AG04450 (cell line): ENCODE measurements at regions of chr12 and their contacts with region 1.

Region 1: GRCh38 chr12:12365931-12366431 is 9.1 kb downstream of the BORCS5 start:
- DNase-seq: no peak
- H3K4me3 ChIP-seq: no peak overlapping the region
- H3K27ac ChIP-seq: peak overlapping the region; percentile 69
- H3K27me3 ChIP-seq: no peaks in the 10 kb centered on the region
- CTCF ChIP-seq: no peak

Region 2: GRCh38 chr12:12315838-12316237 is 50.1 kb before region 1 on chr12:
- CTCF ChIA-PET with region 1: no interaction called
- POLR2A ChIA-PET with region 1: no interaction called
- DNase-seq: no peak
- H3K4me3 ChIP-seq: no peak overlapping the region
- H3K27ac ChIP-seq: no peak overlapping the region
- H3K27me3 ChIP-seq: no peaks in the 10 kb centered on the region
- CTCF ChIP-seq: no peak

Region 3: GRCh38 chr12:12384571-12385340 is 18.8 kb after region 1 on chr12:
- CTCF ChIA-PET with region 1: no interaction called
- POLR2A ChIA-PET with region 1: interaction called, 15 read pairs
- DNase-seq: no peak
- H3K4me3 ChIP-seq: no peak overlapping the region
- H3K27ac ChIP-seq: no peak overlapping the region
- H3K27me3 ChIP-seq: no peaks in the 10 kb centered on the region
- CTCF ChIP-seq: no peak

Region 4: DNA sequence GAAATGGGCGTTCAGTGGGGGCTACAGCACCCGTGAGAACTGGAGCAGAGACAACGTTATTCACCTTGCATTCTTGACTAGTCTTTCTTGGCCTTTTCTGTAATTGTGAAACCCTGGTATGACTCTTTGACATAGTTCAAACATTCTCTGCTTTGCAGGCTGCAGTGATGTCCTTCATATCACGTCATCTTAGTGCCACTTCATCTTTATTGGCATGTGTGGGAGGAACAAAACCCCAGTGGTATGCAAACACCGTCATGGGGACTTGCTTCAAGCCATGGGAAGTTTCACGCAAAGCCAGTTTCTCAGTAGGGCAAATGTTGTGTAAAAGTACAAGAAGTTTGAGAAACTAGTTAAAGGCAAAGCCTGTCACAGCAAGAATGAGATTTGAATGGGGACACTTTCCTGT is 216.9 kb after region 1 on chr12:
- CTCF ChIA-PET with region 1: no interaction called
- POLR2A ChIA-PET with region 1: no interaction called
- DNase-seq: no peak
- H3K4me3 ChIP-seq: no peak overlapping the region
- H3K27ac ChIP-seq: no peak overlapping the region
- H3K27me3 ChIP-seq: peaks cover 3% of the 10 kb centered on the region
- CTCF ChIP-seq: no peak

Region 5: DNA sequence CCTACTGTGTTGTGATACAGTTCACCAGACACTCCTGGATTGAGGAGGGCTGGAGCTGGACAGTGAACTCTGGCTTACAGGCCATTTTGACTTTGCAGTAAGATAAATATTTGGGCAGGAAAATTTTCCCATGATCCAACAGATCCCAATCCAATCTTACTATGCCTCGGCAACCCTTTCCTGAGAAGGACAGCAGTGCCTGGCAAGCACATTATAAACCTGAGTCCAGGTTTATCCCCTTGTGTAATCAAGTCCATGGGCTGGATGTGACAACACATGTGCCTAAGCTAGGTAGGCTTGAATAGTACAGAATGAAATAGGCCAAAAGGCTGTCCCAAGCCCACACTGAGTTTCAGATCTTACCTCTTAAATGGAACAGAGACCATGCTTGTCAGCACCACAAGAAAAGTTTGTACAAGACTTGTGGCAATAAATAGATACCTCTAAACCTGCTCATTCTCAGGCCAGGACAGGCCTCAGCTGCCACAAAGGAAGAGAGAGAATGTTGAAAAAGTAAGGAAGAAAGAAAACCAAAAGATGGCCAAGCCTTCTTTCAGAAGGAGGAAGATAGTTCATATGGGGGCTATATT is 280.6 kb after region 1 on chr12:
- CTCF ChIA-PET with region 1: no interaction called
- POLR2A ChIA-PET with region 1: no interaction called
- DNase-seq: no peak
- H3K4me3 ChIP-seq: no peak overlapping the region
- H3K27ac ChIP-seq: peak overlapping the region; percentile 66
- H3K27me3 ChIP-seq: no peaks in the 10 kb centered on the region
- CTCF ChIP-seq: no peak